A673 (cell line): ENCODE measurements at regions of chr11 and their contacts with region 1.

Region 1: GRCh38 chr11:45964911-45965389 is 42.5 kb downstream of the LARGE2 start:
- DNase-seq: peak; percentile 97
- H3K4me3 ChIP-seq: no peak overlapping the region
- H3K27ac ChIP-seq: no peak overlapping the region
- H3K4me1 ChIP-seq: no peaks in the 10 kb centered on the region
- H3K27me3 ChIP-seq: no peaks in the 10 kb centered on the region
- CTCF ChIP-seq: peak; percentile 100

Region 2: GRCh38 chr11:45885921-45886721 is 78.8 kb before region 1 on chr11:
- CTCF ChIA-PET with region 1: no interaction called
- POLR2A ChIA-PET with region 1: no interaction called
- intact Hi-C with region 1: no loop called
- DNase-seq: no peak
- H3K4me3 ChIP-seq: peak overlapping the region; percentile 58
- H3K27ac ChIP-seq: no peak overlapping the region
- H3K4me1 ChIP-seq: peaks cover 8% of the 10 kb centered on the region
- H3K27me3 ChIP-seq: no peaks in the 10 kb centered on the region
- CTCF ChIP-seq: no peak

Region 3: GRCh38 chr11:45982656-45983470 is 17.9 kb after region 1 on chr11:
- CTCF ChIA-PET with region 1: interaction called, 13 read pairs
- POLR2A ChIA-PET with region 1: interaction called, 3 read pairs
- intact Hi-C with region 1: no loop called
- DNase-seq: peak; percentile 96
- H3K4me3 ChIP-seq: peak overlapping the region; percentile 11
- H3K27ac ChIP-seq: peak overlapping the region; percentile 83
- H3K4me1 ChIP-seq: peaks cover 46% of the 10 kb centered on the region
- H3K27me3 ChIP-seq: no peaks in the 10 kb centered on the region
- CTCF ChIP-seq: no peak

Region 4: DNA sequence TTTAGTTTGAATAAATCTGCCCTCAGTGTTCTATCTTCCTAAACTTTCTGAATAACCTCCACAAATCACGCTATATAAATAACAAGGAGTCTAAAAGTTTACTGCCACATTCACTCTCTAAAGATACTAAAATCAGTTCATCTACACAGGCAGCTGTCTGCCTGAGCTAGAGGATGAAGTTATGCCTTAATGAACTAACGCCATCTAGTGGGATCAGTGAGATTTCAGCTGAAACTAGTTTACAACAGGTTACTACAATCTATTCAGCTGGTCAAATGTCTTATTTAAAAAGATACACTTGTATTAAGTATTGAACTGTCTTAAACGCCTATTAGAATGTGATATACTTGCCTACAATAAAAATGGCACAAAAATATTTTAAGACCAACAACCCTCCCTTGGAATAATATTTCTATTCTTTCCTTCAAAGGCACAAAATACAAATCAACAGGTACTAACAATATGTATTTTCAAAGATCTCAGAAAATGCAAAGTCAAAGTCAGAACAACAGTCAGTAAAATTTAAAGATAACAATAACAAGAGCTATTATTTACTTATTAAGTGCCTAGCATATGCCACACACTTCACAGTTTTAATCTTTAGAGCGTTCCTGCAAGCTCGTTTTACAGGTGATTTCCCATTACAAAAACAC is 41.6 kb after region 1 on chr11:
- CTCF ChIA-PET with region 1: interaction called, 87 read pairs
- POLR2A ChIA-PET with region 1: interaction called, 3 read pairs
- intact Hi-C with region 1: loop called (anchors 1 kb)
- DNase-seq: peak; percentile 95
- H3K4me3 ChIP-seq: no peak overlapping the region
- H3K27ac ChIP-seq: no peak overlapping the region
- H3K4me1 ChIP-seq: peaks cover 28% of the 10 kb centered on the region
- H3K27me3 ChIP-seq: no peaks in the 10 kb centered on the region
- CTCF ChIP-seq: peak; percentile 100

Region 5: DNA sequence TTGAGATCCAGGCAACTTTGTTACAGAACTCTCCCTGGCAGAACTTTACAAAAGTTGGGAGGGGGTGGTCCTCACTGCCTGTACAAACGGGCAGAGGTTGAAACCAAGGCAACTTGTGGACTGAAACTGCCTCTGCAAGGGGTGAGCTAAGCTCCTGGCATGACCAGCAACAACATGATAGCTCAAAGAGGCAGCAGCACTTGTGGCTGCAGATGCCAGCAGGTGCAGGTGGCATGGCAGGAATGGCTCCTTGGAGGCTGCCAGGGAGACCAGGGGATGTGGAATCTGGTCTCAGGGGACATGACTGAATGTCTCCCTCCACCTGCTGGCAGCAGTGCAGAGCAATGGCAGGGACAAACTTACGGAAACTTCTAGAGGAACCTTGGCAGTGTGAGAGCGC is 195.2 kb after region 1 on chr11:
- CTCF ChIA-PET with region 1: interaction called, 15 read pairs
- POLR2A ChIA-PET with region 1: no interaction called
- intact Hi-C with region 1: no loop called
- DNase-seq: no peak
- H3K4me3 ChIP-seq: no peak overlapping the region
- H3K27ac ChIP-seq: no peak overlapping the region
- H3K4me1 ChIP-seq: no peaks in the 10 kb centered on the region
- H3K27me3 ChIP-seq: peaks cover 22% of the 10 kb centered on the region
- CTCF ChIP-seq: no peak

Region 6: DNA sequence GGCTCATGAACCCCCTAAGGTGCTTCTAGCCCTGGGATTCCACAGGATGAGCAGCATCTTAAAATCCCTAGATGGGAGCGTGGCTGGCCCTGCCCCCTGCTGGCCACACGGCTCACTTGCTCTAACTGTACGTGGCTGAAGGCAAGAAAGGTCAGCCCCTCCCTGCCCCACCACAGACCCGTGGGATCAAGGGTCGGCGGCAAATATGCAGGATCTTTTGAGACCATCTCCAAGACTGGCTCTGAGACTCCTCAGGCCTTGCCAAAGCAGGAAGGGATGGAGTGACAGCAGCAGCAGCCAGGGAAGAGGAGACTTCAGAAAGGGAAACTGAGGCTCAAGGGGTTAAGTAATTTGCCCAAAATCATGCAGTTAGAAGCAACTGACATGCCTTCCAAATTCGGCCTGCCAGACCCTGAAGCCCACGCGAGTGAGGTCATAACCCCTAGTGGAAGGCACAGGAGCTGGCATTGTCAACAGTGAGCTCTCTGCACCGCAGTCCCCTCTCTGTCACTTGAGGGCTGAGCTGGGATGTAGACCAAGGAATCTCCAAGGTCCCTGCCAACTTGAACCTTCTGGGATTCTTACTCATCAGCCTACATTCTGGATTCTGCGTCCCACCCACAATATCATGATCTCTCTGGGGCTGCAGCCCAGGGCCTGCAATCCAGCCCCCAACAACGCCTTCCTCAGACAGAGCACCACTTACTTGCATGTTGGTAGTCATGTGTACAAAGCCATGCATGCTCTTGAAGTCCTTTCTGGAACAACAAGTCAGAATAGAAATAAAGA is 343.9 kb after region 1 on chr11:
- CTCF ChIA-PET with region 1: interaction called, 3 read pairs
- POLR2A ChIA-PET with region 1: no interaction called
- intact Hi-C with region 1: loop called (anchors 2 kb)
- DNase-seq: peak; percentile 89
- H3K4me3 ChIP-seq: no peak overlapping the region
- H3K27ac ChIP-seq: no peak overlapping the region
- H3K4me1 ChIP-seq: no peaks in the 10 kb centered on the region
- H3K27me3 ChIP-seq: no peaks in the 10 kb centered on the region
- CTCF ChIP-seq: peak; percentile 100